Dorsolateral prefrontal cortex (tissue), 120 donors: ENCODE measurements at regions of chr9 and their contacts with region 1.

Region 1: DNA sequence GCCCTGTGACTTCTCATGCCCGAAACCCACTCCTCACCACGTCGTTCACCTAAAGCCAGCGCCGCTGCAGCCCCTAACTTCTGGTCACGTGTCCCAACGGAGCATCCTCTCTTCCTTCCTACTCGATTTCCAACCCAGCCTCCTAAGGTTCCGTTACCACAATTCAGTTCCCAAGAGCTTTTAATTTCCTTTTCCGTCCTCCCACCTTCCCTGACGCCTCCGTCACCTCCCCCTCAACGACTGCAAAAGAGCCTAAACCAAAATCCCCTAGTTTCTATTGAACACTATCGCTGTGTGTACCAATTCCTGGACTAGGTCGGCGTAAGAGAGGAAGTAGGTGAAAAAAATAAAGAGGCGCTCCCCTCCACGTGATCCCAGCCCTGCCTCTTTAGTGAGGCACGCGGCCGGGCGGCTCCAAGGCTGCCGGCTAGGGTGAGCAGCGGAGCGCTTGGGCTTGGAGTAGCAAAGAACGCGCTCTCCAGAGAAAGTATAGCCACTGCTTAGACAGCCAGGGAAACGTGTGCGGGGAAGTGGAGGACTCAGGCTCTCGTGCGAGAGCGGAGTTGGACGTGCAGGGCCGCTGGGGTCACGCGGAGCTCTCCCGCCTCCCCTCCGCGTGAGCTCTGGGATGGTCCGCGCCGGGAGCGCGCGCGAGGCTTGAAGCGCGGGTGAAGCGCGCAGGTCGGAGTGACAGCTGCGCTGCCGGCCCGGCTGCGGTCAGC is at the starts of genes CENPP and NOL8:
- DNase-seq: peak; percentile 70 to 92 (median 87)
- H3K4me3 ChIP-seq: peak within 1 kb of the TSS; percentile 63 to 98 (median 89)
- H3K27ac ChIP-seq: peak within 1 kb of the TSS; percentile 90 to 100 (median 98)
- H3K27me3 ChIP-seq: no peaks in the 10 kb centered on the region
- CTCF ChIP-seq: peak in 16 of 56 donors; percentile 1 to 51 (median 20)
- total RNA-seq, gene CENPP: 1.7 to 16.5 (median 7.0) TPM
- total RNA-seq, gene NOL8: 18.8 to 50.5 (median 32.6) TPM

Region 2: DNA sequence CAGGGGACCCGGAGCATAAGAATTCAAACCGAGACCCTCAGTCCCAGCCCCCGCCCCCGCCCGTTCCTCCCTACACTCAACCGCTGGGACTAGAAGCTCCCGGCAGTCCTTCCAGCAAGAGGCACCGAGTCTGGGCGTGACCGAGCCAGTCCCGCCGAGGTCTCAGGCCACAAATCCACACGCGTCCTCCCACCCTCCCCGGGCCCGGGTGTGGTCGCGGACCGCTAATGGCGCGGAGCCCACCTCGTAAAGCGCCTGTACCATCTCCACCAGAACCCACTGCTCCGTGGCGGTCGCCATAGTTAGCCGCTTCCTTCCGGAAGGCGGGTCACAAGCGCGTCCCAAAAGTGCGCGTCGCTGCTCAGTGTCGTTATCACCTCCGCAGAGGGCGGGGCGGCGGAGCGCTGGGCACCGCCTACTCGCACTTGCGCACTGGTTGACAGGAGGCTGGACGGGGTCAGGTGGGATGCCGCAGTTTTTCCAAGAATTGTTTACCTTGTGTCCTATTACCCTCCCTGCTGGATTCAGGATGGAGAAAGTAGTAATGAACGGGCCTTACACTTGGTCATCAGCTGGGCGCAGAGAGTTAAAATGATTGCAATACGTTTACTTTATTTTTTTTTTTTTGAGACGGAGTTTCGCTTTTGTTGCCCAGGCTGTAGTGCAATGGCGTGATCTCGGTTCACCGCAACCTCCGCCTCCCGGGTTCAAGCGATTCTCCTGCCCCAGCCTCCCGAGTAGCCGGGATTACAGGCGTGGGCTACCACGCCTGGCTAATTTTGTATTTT is 210.2 kb before region 1 on chr9 and contains the start of gene SPTLC1:
- intact Hi-C with region 1: loop called in 1 of 2 experiments (anchors 1 kb)
- DNase-seq: peak; percentile 91 to 96 (median 94)
- H3K4me3 ChIP-seq: peak within 1 kb of the TSS; percentile 68 to 95 (median 84)
- H3K27ac ChIP-seq: peak within 1 kb of the TSS; percentile 46 to 97 (median 89)
- H3K27me3 ChIP-seq: no peaks in the 10 kb centered on the region
- CTCF ChIP-seq: peak in 34 of 56 donors; percentile 6 to 54 (median 26)
- total RNA-seq, gene SPTLC1: 39.1 to 77.8 (median 58.2) TPM

Region 3: DNA sequence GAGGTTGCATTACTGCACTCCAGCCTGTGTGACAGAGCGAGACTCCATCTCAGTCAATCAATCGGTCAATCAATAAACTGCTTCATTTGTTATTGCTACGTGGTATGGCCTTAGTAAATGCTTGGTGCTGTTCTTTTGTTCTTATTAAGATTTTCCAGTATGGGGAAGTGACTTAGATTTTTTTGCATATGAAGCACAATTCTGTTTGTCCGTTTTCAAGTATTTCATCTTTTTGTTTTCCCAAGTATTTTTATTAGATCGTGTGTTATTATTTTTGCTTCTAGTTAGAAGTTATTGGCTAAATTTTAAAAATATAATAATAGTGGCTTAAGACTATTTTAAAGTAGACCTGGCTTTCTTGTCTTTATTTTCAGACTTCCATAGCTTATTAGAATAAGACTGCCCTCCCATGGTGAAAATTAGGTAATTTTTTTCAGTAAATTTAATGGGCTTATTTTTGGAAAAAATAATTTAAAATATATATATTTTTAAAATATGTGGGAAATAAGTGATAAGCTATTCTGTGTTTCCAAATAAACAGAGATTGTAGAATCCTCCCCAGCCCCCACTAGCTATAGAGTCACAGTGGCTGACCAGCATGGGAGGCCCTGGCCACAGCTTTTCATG is 113.6 kb after region 1 on chr9:
- intact Hi-C with region 1: loop called in 1 of 2 experiments (anchors 10 kb)
- DNase-seq: no peak
- H3K4me3 ChIP-seq: no peak overlapping the region
- H3K27ac ChIP-seq: no peak overlapping the region
- H3K27me3 ChIP-seq: no peaks in the 10 kb centered on the region
- CTCF ChIP-seq: peak in 53 of 56 donors; percentile 21 to 67 (median 44)

Region 4: DNA sequence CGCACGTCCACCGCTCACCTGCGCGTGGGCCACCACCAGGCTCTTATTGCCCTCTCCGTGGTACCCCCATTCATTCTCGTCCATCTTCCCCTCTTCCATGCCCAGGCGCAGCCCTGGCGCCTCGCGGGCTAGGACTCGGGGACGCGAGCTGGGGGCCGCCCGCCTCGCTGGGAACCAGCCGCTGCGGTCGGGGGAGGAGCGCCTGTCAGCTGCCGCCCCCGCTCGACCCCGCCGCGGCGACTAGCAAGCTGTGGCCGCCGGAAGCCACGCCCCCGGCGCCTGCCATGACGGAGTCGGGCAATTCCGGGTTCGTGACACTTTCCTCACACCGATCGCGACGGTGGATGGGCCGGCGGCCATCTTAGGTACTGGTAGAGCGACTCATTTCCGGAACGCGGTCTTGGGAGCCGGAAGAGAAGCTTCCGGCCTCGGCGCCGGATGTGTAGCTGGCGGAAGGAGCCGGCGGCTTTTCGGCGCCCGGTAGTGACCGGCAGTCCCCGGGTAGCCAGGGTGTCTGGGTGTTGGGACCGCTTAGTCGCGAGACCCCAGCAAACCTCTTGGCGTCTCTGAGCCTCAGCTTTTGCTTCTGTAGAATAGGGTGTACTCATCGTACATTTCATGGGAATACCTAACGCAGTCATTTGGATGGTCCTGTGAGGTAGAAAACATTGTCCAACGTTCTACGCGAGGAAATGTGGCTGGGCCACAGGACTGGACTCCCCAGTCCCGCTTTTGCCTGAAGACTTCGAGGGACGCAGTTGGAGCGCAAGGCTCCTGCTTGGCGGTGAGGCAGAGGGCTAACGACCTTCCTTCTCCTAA is 344.7 kb after region 1 on chr9 and contains the start of gene IPPK:
- intact Hi-C with region 1: loop called (anchors 1 to 2 kb)
- DNase-seq: peak; percentile 95 to 99 (median 98)
- H3K4me3 ChIP-seq: peak within 1 kb of the TSS; percentile 68 to 100 (median 94)
- H3K27ac ChIP-seq: peak within 1 kb of the TSS; percentile 36 to 94 (median 86)
- H3K27me3 ChIP-seq: no peaks in the 10 kb centered on the region
- CTCF ChIP-seq: peak in 39 of 56 donors; percentile 12 to 58 (median 32)
- total RNA-seq, gene IPPK: 10.7 to 26.7 (median 16.0) TPM

Region 5: DNA sequence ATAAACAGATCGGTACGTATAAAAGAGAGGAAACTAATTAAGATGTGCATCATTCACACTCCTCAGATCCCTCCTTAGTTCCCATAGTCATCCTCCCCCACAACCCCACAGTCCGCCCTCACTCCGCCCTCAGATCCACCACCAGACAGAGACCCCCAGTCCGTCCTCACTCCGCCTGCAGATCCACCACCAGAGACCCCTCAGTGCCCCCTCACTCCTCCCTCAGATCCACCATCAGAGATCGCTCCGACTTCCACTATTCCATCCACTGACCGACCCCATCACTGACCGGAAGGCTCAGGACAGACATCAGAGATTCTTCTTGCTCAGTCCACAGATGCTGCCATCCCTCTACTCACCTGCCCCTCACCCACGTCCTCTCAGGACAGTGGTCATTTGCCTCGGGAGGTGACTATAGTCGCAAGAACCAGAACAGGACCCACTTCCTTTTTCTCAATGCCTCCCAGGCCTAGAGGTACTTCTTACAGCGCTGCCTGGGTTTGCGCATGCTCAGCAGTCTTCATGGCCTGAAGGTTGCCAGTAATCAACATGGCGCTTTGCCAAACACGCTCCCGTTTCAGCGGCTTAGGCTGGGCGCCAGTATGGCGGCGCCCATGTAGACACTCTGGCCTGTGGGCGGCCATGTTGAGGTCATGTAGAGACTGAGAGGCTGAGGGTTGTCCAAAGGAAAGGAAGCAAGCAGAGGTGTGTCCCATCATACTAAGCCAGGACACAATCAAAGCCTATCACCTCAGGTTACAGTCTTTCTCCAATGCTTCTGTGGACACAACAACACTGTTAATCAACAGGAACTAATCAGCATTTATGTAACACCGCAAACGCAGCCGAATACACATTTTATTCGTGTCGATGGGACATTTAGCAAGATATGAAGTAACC is 552.4 kb after region 1 on chr9 and contains the start of gene ZNF484:
- intact Hi-C with region 1: loop called in 1 of 2 experiments (anchors 10 kb)
- DNase-seq: peak; percentile 92 to 98 (median 96)
- H3K4me3 ChIP-seq: peak within 1 kb of the TSS; percentile 56 to 90 (median 75)
- H3K27ac ChIP-seq: peak within 1 kb of the TSS; percentile 53 to 95 (median 81)
- H3K27me3 ChIP-seq: no peaks in the 10 kb centered on the region
- CTCF ChIP-seq: peak in 29 of 56 donors; percentile 4 to 56 (median 28)
- total RNA-seq, gene ZNF484: 15.5 to 31.6 (median 21.1) TPM

Region 6: GRCh38 chr9:93319992-93320500 is 994.6 kb after region 1 on chr9:
- intact Hi-C with region 1: no loop called
- DNase-seq: no peak
- H3K4me3 ChIP-seq: no peak overlapping the region
- H3K27ac ChIP-seq: peak overlapping the region in 2 of 59 donors; percentile 1 to 20
- H3K27me3 ChIP-seq: no peaks in the 10 kb centered on the region
- CTCF ChIP-seq: no peak